Heart left ventricle (tissue), 16 donors: ENCODE measurements at regions of chr1 and their contacts with region 1.

Region 1: DNA sequence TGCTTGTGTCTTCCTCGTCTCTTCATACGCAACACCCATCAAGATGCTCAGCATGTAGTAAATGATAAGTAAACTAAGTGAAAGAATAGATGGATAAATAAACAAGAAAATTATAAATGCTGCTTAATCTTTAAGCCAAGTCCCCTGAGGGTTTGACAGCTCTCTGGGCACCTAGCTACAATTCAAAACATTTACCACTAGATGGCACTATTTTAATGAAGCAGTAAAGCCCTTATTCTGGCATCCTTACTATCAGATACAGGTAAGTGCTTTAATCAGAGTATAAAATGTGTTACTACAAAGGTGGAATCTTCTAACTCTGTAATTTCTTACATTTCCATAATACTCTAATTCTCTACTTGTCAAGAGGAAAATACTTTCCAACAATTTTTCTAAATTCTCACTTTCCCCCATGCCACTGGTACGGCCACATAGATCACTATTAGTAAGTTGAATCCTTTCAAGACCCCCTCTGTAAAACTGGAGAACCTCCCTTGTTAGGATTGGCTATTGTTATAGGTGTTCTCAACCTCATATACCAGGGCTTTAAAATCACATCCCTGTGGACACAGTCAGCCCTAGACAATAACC is 137.8 kb downstream of the BARHL2 start:
- DNase-seq: no peak
- ATAC-seq: no peak
- H3K4me3 ChIP-seq: no peak overlapping the region
- H3K27ac ChIP-seq: no peak overlapping the region
- H3K4me1 ChIP-seq: no peaks in the 10 kb centered on the region
- H3K27me3 ChIP-seq: peaks cover 0 to 41% (median 3%) of the 10 kb centered on the region in 9 donors
- CTCF ChIP-seq: peak; percentile 42 to 75 (median 67)
- POLR2A ChIP-seq: no peak

Region 2: DNA sequence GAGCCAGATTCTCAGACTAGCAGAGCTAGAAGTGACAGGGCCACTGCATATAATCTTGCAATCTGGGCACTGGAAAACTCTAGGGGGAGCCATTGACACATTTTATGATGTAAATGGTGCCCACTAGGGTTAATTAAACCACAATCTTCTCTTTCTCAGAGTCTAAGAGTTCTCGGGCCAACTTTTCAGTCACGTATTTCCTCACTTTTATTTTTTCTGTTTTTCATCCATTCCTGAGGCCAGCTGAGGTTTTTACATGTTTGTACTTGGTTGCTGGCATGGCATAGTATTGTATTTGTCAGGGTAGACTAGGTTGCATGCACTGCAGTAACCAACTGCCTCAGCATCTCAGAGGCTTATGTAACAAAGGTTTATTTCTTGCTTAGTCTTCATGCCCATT is 446.2 kb before region 1 on chr1:
- intact Hi-C with region 1: loop called in 3 of 10 experiments (anchors 10 kb)
- DNase-seq: no peak
- ATAC-seq: no peak
- H3K4me3 ChIP-seq: no peak overlapping the region
- H3K27ac ChIP-seq: no peak overlapping the region
- H3K4me1 ChIP-seq: peaks cover 0 to 5% (median 0%) of the 10 kb centered on the region in 12 donors
- H3K27me3 ChIP-seq: peaks cover 0 to 11% (median 0%) of the 10 kb centered on the region in 9 donors
- CTCF ChIP-seq: peak; percentile 8 to 58 (median 40)
- POLR2A ChIP-seq: no peak